Ascending aorta (tissue), 2 donors: ENCODE measurements at regions of chr2 and their contacts with region 1.

Region 1: GRCh38 chr2:38465789-38466127 is 88.7 kb upstream of the ATL2 start:
- DNase-seq: no peak
- H3K4me3 ChIP-seq: no peak overlapping the region
- H3K27ac ChIP-seq: peak overlapping the region; percentile 20 to 28
- H3K4me1 ChIP-seq: peaks cover 0 to 6% of the 10 kb centered on the region in 2 donors
- H3K27me3 ChIP-seq: no peaks in the 10 kb centered on the region
- CTCF ChIP-seq: no peak

Region 2: GRCh38 chr2:38528008-38528442 is 62.3 kb after region 1 on chr2:
- intact Hi-C with region 1: loop called (anchors 5 kb)
- DNase-seq: peak in 1 of 2 donors; percentile 73
- H3K4me3 ChIP-seq: peak overlapping the region; percentile 69 to 70
- H3K27ac ChIP-seq: peak overlapping the region; percentile 70 to 74
- H3K4me1 ChIP-seq: peaks cover 0 to 28% of the 10 kb centered on the region in 2 donors
- H3K27me3 ChIP-seq: no peaks in the 10 kb centered on the region
- CTCF ChIP-seq: no peak